GM10248 (cell line): ENCODE measurements at regions of chr7 and their contacts with region 1.

Region 1: DNA sequence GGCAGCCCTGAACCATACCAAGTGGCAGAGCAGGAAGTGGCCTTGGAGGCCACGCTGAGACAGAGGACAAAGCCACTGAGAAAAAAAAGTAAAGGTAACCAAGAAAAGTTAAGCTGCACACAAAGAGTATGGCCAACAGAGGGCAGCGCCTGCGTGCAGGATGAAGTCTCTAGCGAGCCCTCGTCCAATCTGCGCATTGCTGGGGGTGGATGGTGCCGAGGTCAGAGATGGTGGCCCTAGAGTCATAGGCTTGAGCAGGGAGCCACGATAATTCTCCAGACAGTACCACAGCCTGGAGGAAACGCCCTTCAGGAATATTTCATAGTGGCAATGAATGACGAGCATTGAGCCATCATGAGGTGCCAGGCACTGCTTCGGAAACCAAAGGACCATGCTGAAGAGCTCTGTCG is 9.7 kb downstream of the ATP6V0E2 start:
- DNase-seq: peak; percentile 70
- CTCF ChIP-seq: peak; percentile 71

Region 2: DNA sequence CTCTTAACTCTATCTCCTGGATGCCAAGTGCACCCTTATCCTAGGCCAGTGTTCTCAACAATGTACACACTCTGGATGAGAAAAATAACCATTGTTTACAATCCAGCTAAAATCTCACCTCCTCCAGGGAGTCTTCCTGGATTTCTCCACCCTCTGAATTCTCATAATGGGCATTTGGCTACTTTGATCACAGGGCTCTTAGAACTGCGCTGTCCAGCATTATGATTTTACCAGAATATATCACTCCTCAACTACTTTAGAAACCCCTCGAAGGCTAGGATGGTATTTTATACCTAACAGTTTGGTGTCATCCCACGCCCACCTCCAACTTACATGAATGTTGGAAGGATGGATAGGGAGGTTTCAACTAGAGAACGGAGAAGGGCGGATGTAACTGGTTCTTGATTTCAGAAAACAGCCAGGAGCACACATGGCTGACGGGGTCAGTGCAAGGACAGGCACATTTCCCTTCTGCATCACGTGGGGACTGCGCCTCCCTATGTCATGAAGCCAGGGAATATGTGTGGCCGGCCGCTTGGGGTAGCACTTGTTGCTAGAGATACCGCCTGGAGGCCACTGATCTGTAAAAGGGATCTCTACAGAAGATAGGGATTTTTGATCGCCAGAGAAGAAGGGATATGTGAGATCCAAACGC is 10.9 kb before region 1 on chr7:
- CTCF ChIA-PET with region 1: interaction called, 23 read pairs
- POLR2A ChIA-PET with region 1: no interaction called
- DNase-seq: peak; percentile 56
- CTCF ChIP-seq: peak; percentile 10